ENCODE measurements at regions of chr12 and their contacts with region 1.

Region 1: GRCh38 chr12:51025836-51026638 is at the start of gene SLC11A2:
- DNase-seq: peak; percentile 96
- H3K4me3 Mint-ChIP-seq: peak within 1 kb of the TSS; percentile 77
- H3K27ac Mint-ChIP-seq: peak within 1 kb of the TSS; percentile 99
- H3K4me1 Mint-ChIP-seq: peaks cover 34% of the 10 kb centered on the region
- H3K27me3 Mint-ChIP-seq: no peaks in the 10 kb centered on the region
- CTCF ChIP-seq: no peak
- total RNA-seq, gene SLC11A2: 45.6 and 60.9 TPM in 2 replicates

Region 2: DNA sequence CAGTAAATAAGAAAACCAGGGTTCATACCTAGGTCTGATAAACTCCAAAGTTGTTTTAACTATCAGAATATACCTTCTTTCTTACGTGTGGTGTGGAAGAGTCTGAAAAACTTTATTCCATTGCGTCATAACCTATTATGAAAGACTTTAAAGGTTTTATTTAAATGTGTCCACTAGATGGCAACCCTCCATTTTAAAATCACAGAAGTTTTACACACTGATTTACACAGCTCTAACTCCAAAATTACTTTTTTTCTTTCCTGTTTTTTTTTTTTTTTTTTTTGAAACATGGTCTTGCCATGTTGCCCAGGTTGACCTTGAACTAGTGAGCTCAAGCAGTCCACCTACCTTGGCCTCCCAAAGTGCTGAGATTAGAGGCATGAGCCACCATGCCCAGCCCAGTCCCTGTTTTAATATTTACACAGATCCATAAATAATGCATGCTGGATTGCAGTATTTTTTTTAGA is 200.6 kb before region 1 on chr12:
- CTCF ChIA-PET with region 1: interaction called, 9 read pairs
- POLR2A ChIA-PET with region 1: interaction called, 26 read pairs
- intact Hi-C with region 1: loop called (anchors 1 kb)
- DNase-seq: peak; percentile 73
- H3K4me3 Mint-ChIP-seq: no peak overlapping the region
- H3K27ac Mint-ChIP-seq: peak overlapping the region; percentile 11
- H3K4me1 Mint-ChIP-seq: peaks cover 18% of the 10 kb centered on the region
- H3K27me3 Mint-ChIP-seq: no peaks in the 10 kb centered on the region
- CTCF ChIP-seq: peak; percentile 25

Region 3: GRCh38 chr12:51011955-51012354 is 14.1 kb before region 1 on chr12:
- CTCF ChIA-PET with region 1: interaction called, 6 read pairs
- POLR2A ChIA-PET with region 1: interaction called, 12 read pairs
- intact Hi-C with region 1: no loop called
- DNase-seq: no peak
- H3K4me3 Mint-ChIP-seq: no peak overlapping the region
- H3K27ac Mint-ChIP-seq: no peak overlapping the region
- H3K4me1 Mint-ChIP-seq: peaks cover 10% of the 10 kb centered on the region
- H3K27me3 Mint-ChIP-seq: no peaks in the 10 kb centered on the region
- CTCF ChIP-seq: no peak

Region 4: GRCh38 chr12:51062631-51063397 is 36.8 kb after region 1 on chr12:
- CTCF ChIA-PET with region 1: interaction called, 3 read pairs
- POLR2A ChIA-PET with region 1: interaction called, 10 read pairs
- intact Hi-C with region 1: no loop called
- DNase-seq: no peak
- H3K4me3 Mint-ChIP-seq: no peak overlapping the region
- H3K27ac Mint-ChIP-seq: no peak overlapping the region
- H3K4me1 Mint-ChIP-seq: no peaks in the 10 kb centered on the region
- H3K27me3 Mint-ChIP-seq: no peaks in the 10 kb centered on the region
- CTCF ChIP-seq: no peak

Region 5: DNA sequence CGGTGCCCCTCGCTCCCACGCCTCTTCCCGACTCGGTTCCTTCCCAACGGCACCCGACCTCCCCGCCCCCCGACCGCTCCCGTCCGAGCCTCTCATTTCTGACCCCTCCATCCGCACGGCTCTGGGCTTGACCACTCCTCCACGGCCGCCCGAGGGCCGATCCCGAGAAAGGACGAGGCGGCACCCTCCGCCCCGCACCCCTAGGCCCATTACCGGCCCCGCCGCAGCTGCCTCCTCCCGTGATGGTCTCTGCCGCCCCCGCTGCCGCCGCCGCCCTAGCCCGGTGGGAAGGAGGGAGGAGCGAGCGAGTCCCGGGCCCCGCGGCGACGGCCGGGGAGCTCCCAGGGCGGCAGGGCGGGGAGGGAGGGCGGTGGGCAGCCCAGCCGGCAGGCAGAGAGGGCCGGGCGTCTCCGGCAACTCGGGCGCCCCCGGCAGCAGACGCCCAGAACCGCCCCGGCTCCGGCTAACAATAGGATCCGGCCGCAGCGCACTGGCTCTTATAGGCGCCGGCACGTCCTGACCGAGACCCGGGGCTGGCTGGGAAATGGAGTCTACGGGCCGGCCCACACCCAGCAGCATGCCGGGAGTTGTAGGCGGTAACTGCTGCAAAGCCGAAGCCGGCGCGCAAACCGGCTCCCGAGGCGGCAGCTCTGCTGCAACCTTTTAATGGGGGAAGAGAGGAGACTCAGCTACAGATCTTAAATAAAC is 57.2 kb after region 1 on chr12 and contains the start of gene CSRNP2:
- CTCF ChIA-PET with region 1: no interaction called
- POLR2A ChIA-PET with region 1: interaction called, 43 read pairs
- intact Hi-C with region 1: no loop called
- DNase-seq: peak; percentile 93
- H3K4me3 Mint-ChIP-seq: peak within 1 kb of the TSS; percentile 88
- H3K27ac Mint-ChIP-seq: peak within 1 kb of the TSS; percentile 46
- H3K4me1 Mint-ChIP-seq: peaks cover 13% of the 10 kb centered on the region
- H3K27me3 Mint-ChIP-seq: no peaks in the 10 kb centered on the region
- CTCF ChIP-seq: no peak
- total RNA-seq, gene CSRNP2: 41.4 and 46.3 TPM in 2 replicates

Region 6: DNA sequence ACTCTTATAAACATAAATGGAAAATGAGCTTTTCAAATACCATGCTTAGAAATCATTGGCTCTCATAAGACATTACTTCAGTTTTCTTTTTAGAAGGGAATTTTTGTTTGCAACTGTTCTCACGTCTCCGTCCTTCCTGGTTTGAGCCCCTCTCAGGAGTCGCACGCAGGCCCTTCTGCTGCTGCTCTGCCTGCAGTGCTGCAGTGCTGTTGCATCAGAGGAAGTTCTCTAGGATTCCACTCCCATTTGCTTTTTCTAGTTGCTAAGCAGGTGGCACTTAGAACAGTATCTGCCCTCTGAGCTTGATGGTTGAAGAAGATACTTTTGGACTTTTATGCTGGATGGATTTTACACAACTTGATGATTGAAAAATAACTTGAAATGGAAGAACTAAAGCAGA is 635.8 kb after region 1 on chr12:
- CTCF ChIA-PET with region 1: no interaction called
- POLR2A ChIA-PET with region 1: no interaction called
- intact Hi-C with region 1: no loop called
- DNase-seq: no peak
- H3K4me3 Mint-ChIP-seq: no peak overlapping the region
- H3K27ac Mint-ChIP-seq: no peak overlapping the region
- H3K4me1 Mint-ChIP-seq: no peaks in the 10 kb centered on the region
- H3K27me3 Mint-ChIP-seq: peaks cover 60% of the 10 kb centered on the region
- CTCF ChIP-seq: no peak